ENCODE measurements at regions of chr14 and their contacts with region 1.

Region 1: GRCh38 chr14:71855399-71856036 is 76.7 kb upstream of the RGS6 start:
- DNase-seq: peak; percentile 67
- H3K4me3 ChIP-seq: no peak overlapping the region
- H3K27ac ChIP-seq: no peak overlapping the region
- H3K4me1 ChIP-seq: peaks cover 3% of the 10 kb centered on the region
- H3K27me3 ChIP-seq: peaks cover 0 to 2% of the 10 kb centered on the region in 2 experiments
- CTCF ChIP-seq: peak; percentile 73 to 78
- POLR2A ChIP-seq: no peak

Region 2: GRCh38 chr14:71103662-71104484 is 751.6 kb before region 1 on chr14:
- CTCF ChIA-PET with region 1: interaction called, 50 read pairs
- POLR2A ChIA-PET with region 1: no interaction called
- dilution Hi-C with region 1: no loop called
- intact Hi-C with region 1: no loop called
- DNase-seq: peak; percentile 68
- H3K4me3 ChIP-seq: no peak overlapping the region
- H3K27ac ChIP-seq: no peak overlapping the region
- H3K4me1 ChIP-seq: no peaks in the 10 kb centered on the region
- H3K27me3 ChIP-seq: no peaks in the 10 kb centered on the region
- CTCF ChIP-seq: peak; percentile 59 to 67
- POLR2A ChIP-seq: no peak

Region 3: DNA sequence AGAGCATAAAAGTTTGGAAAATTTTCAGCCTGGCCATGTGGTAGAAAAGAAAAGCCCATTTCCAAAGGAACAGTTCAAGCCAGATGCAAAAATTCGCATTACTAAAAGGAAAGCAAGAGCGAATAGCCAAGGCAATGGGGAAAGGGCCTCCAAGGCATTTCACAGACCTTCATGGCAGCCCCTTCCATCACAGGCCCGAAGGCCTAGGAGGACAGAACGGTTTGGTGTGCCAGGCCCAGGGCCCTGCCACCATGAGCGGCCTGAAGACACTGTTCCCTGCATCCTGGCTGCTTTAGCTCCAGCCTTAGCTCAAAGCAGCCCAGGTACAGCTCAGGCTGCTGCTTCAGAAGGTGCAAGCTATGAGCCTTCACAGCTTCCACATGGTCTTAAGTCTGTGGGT is 704.8 kb before region 1 on chr14:
- CTCF ChIA-PET with region 1: interaction called, 28 read pairs
- POLR2A ChIA-PET with region 1: no interaction called
- dilution Hi-C with region 1: no loop called
- intact Hi-C with region 1: no loop called
- DNase-seq: no peak
- H3K4me3 ChIP-seq: no peak overlapping the region
- H3K27ac ChIP-seq: no peak overlapping the region
- H3K4me1 ChIP-seq: no peaks in the 10 kb centered on the region
- H3K27me3 ChIP-seq: no peaks in the 10 kb centered on the region
- CTCF ChIP-seq: no peak
- POLR2A ChIP-seq: no peak

Region 4: DNA sequence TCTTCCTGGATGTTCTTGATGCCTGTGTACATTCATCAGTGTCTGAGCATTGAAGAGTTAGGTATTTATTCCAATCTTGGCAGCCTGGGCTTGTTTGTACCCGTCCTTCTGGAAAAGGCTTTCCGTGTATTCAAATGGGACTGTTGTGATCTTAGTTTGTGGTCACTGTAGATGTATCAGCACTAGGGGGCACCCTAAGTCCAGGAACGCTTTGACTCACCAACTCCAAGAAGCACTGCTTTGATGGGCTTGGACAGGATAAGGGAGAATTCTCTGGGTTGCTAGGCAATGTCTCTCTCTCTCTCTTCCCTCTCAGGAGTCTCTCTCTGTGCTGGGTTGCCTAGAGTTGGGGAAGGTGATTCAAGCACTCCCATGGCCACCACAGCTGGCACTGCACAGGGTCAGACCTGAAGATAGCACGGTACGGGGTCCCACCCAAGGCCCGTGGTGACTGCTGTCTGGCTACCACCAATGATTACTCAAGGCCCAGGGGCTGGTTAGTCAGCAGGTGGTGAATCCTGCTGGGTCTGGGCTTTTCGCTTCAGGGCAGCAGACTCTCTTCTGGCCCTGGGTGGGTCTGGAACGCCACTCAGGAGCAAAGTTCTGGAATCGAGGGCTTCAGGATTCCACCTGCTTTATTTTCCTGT is 134.4 kb before region 1 on chr14:
- CTCF ChIA-PET with region 1: interaction called, 143 read pairs
- POLR2A ChIA-PET with region 1: no interaction called
- dilution Hi-C with region 1: no loop called
- intact Hi-C with region 1: no loop called
- DNase-seq: peak; percentile 70
- H3K4me3 ChIP-seq: no peak overlapping the region
- H3K27ac ChIP-seq: no peak overlapping the region
- H3K4me1 ChIP-seq: no peaks in the 10 kb centered on the region
- H3K27me3 ChIP-seq: no peaks in the 10 kb centered on the region
- CTCF ChIP-seq: peak; percentile 70 to 72
- POLR2A ChIP-seq: no peak

Region 5: GRCh38 chr14:71833476-71833875 is 22.0 kb before region 1 on chr14:
- CTCF ChIA-PET with region 1: interaction called, 39 read pairs
- POLR2A ChIA-PET with region 1: no interaction called
- dilution Hi-C with region 1: no loop called
- intact Hi-C with region 1: no loop called
- DNase-seq: no peak
- H3K4me3 ChIP-seq: no peak overlapping the region
- H3K27ac ChIP-seq: no peak overlapping the region
- H3K4me1 ChIP-seq: no peaks in the 10 kb centered on the region
- H3K27me3 ChIP-seq: no peaks in the 10 kb centered on the region
- CTCF ChIP-seq: no peak
- POLR2A ChIP-seq: no peak